Vagina (tissue), 2 donors: ENCODE measurements at regions of chr2 and their contacts with region 1.

Region 1: GRCh38 chr2:85826990-85827878 is 61.6 kb downstream of the ST3GAL5 start:
- DNase-seq: no peak
- H3K4me3 ChIP-seq: peak overlapping the region; percentile 15 to 37
- H3K27ac ChIP-seq: peak overlapping the region; percentile 44
- H3K4me1 ChIP-seq: peaks cover 11% of the 10 kb centered on the region
- H3K27me3 ChIP-seq: no peaks in the 10 kb centered on the region
- CTCF ChIP-seq: peak; percentile 84 to 96 (median 95)
- POLR2A ChIP-seq: no peak

Region 2: GRCh38 chr2:85888684-85889626 is 61.7 kb after region 1 on chr2 and contains the start of gene ST3GAL5:
- intact Hi-C with region 1: loop called (anchors 10 kb)
- DNase-seq: no peak
- H3K4me3 ChIP-seq: peak within 1 kb of the TSS; percentile 76 to 79
- H3K27ac ChIP-seq: peak within 1 kb of the TSS; percentile 94
- H3K4me1 ChIP-seq: peaks cover 39% of the 10 kb centered on the region
- H3K27me3 ChIP-seq: no peaks in the 10 kb centered on the region
- CTCF ChIP-seq: peak in 2 of 3 experiments; percentile 49 to 60
- POLR2A ChIP-seq: peak in 1 of 2 donors; percentile 33
- total RNA-seq, gene ST3GAL5: 16.2 TPM

Region 3: DNA sequence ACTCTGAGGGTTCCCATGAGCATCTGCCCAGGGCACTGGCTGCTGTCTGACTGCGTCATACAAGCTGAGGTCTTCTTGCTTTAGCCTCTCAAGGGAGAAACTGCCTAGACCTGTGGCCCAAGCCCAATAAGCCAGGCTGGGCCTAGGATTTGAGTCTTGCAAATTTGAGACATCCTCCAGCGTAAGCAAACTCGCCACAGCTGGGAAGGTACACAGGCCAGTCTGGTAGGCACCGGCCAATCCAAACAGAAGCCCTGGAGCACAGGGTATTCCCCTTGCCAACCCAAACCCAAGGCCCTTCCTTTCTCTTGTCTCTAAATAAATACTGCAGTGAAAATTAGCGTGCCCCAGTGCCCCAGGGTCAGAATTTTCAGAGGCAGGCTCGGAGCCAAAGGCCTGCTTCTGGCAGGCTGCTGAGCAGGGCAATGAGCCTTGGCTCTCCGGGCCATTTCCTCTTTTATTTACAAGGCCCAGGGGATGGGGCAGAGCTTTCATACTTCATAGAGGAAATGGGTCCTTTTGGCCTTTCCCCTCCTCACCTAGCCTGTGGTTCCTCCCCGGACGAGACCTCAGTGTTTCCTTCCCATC is 245.1 kb after region 1 on chr2:
- intact Hi-C with region 1: loop called (anchors 5 kb)
- DNase-seq: no peak
- H3K4me3 ChIP-seq: no peak overlapping the region
- H3K27ac ChIP-seq: peak overlapping the region; percentile 42
- H3K4me1 ChIP-seq: peaks cover 11% of the 10 kb centered on the region
- H3K27me3 ChIP-seq: no peaks in the 10 kb centered on the region
- CTCF ChIP-seq: no peak
- POLR2A ChIP-seq: no peak